Heart right ventricle (tissue), 16 donors: ENCODE measurements at regions of chr3 and their contacts with region 1.

Region 1: DNA sequence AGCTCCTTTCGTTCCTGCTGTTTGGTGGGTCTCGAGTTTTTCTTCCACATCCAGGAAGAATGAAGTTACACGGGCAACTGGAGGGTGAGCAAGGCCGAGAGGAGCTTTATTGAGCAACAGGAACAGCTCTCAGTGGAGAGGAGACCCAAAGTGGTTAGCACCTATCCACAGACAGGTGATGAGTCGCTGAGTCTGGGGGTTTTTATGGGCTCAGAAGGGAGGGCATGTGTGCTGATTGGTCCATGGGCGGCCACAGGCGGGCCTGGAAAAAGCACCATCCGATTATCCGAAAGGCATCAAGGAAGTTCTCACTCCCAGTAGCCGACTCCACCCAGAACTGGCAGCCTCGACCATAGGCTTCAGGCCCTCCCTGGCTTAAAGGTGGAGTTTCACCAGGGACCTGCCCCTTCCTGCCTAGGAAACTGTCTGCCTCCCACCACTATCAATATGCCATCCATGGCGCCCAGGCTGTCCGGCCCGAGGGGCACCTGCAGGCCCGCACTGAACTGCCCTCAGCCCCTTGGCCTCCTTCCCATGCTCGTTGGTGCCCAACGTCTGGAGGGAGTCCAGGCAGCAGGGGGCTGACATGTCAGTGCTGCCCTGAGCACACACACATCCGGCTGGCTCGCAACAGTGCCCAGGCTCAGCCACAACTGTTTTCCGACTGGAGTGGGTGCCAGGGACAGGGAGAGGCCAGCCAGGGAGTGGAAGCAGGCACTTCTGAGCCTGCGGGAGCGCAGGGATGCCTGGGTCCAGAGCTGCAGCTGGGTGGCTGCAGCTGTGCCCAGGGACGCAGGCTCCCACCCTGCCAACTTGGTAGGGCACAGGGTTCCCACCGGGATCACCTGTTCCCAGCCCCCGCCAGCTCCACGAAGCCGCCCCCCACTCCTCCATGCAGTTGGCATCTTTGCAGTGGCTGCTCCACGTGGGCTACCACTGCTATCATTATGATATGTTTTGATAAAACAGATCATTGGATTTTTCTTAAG is 170.2 kb downstream of the FNDC3B start:
- DNase-seq: peak; percentile 61 to 66
- ATAC-seq: peak; percentile 64 to 95 (median 86)
- H3K4me3 ChIP-seq: peak overlapping the region in 1 of 10 donors; percentile 16
- H3K27ac ChIP-seq: peak overlapping the region in 9 of 10 donors; percentile 3 to 71 (median 47)
- H3K4me1 ChIP-seq: peaks cover 12 to 98% (median 64%) of the 10 kb centered on the region in 9 donors
- H3K27me3 ChIP-seq: no peaks in the 10 kb centered on the region
- CTCF ChIP-seq: no peak

Region 2: DNA sequence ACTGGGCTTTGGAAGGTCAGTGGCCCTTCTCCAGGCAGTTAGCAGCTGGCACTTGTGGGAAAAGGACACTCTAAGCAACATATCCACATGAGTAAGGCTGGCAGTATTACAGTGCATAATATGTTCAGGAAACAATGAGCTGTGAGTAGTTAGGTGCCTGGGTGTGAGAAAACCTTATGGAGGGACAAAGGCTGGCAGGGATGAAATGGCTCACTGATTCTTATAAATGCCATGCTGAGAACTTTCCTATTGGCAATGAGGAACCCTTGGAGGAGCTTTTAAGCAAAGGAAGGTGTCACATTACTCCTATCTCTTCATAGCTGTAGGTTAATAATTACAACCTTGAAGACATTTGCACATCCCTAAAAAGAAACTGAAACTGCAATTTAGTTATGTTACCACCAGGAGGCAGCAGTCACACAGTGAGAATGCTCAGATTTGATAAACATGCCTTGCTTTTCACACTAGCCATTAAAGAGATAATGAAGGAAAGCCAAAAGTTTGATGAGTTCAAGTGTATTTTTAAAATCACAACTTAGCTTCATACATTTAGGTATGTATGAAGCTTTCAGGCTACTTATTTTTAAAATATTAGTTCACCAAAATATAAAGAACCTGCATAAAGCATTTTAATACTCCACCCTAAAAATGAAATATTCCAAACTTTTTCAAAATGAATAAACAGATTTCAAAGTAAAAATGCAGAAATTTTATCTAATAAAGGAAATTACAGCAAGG is 1046.5 kb before region 1 on chr3:
- intact Hi-C with region 1: no loop called
- DNase-seq: no peak
- ATAC-seq: no peak
- H3K4me3 ChIP-seq: no peak overlapping the region
- H3K27ac ChIP-seq: no peak overlapping the region
- H3K4me1 ChIP-seq: peaks cover 0 to 3% (median 0%) of the 10 kb centered on the region in 9 donors
- H3K27me3 ChIP-seq: no peaks in the 10 kb centered on the region
- CTCF ChIP-seq: peak in 6 of 9 donors; percentile 21 to 60 (median 42)

Region 3: GRCh38 chr3:172249039-172249438 is 39.4 kb after region 1 on chr3:
- intact Hi-C with region 1: loop called in 1 of 10 experiments (anchors 5 kb)
- DNase-seq: no peak
- ATAC-seq: no peak
- H3K4me3 ChIP-seq: no peak overlapping the region
- H3K27ac ChIP-seq: no peak overlapping the region
- H3K4me1 ChIP-seq: peaks cover 0 to 39% (median 32%) of the 10 kb centered on the region in 9 donors
- H3K27me3 ChIP-seq: no peaks in the 10 kb centered on the region
- CTCF ChIP-seq: no peak